ENCODE measurements at regions of chr13 and their contacts with region 1.

Region 1: DNA sequence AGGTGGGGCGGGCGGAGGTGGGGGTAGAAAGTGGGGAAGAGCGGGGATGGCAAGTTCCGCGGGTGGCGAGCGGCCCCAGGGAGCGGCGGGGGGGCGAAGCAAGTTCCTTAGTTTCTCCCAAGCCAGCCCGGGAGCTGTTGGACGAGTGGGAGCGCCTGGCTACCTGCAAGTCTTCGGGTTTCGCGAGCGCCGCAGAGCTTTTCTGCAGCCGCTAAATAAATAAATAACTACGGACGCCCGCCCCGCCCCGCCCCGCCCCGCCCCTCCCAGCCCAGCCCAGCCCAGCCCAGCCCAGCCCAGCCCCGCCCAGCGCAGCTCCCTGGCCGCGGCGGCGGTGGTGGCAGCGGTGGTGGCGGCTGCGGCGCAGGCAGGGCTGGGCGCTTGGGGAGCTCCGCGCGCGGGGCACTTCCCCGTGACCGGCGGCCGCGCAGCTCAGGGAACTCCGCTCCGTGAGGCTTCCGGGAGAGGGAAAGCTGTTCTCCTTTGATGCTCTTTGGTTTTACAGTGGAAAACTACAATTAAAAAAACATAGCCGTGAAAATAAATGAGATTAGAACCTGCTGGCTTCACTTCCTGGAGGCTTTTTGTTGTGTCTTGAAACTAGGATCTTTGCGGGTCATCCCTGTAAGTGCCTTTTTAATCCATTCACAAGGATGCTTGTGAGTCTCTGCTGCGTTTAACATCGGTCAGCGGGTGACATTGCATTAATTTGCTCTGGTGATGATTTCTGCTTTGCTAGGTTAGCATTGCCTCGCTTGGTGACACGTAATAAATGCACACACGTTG is at the start of gene UBE2L5:
- DNase-seq: peak; percentile 95
- H3K4me3 ChIP-seq: peak within 1 kb of the TSS; percentile 60 to 74 (median 65)
- H3K27ac ChIP-seq: peak within 1 kb of the TSS; percentile 91 to 97 (median 93)
- H3K4me1 ChIP-seq: peaks cover 5 to 39% (median 22%) of the 10 kb centered on the region in 4 donors
- H3K27me3 ChIP-seq: no peaks in the 10 kb centered on the region
- CTCF ChIP-seq: no peak
- EP300 ChIP-seq: no peak
- POLR2A ChIP-seq: no peak
- total RNA-seq, gene UBE2L5: 0.39 TPM in 1 of 4 donors, not detected in the others

Region 2: GRCh38 chr13:30306762-30307193 is 115.5 kb before region 1 on chr13:
- intact Hi-C with region 1: loop called (anchors 5 kb)
- DNase-seq: peak; percentile 98
- H3K4me3 ChIP-seq: peak overlapping the region; percentile 85 to 99 (median 93)
- H3K27ac ChIP-seq: peak overlapping the region; percentile 94 to 99 (median 96)
- H3K4me1 ChIP-seq: peaks cover 30 to 66% (median 59%) of the 10 kb centered on the region in 4 donors
- H3K27me3 ChIP-seq: no peaks in the 10 kb centered on the region
- CTCF ChIP-seq: no peak
- EP300 ChIP-seq: no peak
- POLR2A ChIP-seq: no peak

Region 3: GRCh38 chr13:30493658-30494381 is 71.6 kb after region 1 on chr13:
- intact Hi-C with region 1: no loop called
- DNase-seq: no peak
- H3K4me3 ChIP-seq: no peak overlapping the region
- H3K27ac ChIP-seq: no peak overlapping the region
- H3K4me1 ChIP-seq: no peaks in the 10 kb centered on the region
- H3K27me3 ChIP-seq: no peaks in the 10 kb centered on the region
- CTCF ChIP-seq: no peak
- EP300 ChIP-seq: no peak
- POLR2A ChIP-seq: no peak